ENCODE measurements at regions of chr6 and their contacts with region 1.

Region 1: GRCh38 chr6:145633981-145634627 is 101.2 kb downstream of the EPM2A start:
- ATAC-seq: peak; percentile 89 to 98 (median 94)
- H3K4me3 ChIP-seq: no peak overlapping the region
- H3K27ac ChIP-seq: no peak overlapping the region
- H3K4me1 ChIP-seq: peaks cover 0 to 10% of the 10 kb centered on the region in 2 donors

Region 2: DNA sequence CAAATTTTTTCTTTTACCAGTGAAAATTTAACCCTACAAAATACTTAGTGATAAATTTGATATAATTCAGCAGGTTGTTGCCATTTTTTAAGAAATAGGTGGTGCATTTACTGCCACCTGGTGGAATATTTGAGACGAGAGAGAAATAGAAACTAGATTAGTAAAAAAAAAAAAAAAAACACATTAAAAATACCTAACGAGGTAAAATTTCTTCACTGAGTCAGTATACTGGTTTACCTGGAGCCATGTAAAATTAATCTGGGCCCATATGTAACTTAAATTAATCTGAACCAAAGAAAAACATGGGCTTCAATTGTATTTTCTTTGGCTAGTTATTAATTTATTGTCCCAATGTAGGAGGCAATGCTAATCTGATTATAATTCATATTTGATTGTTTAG is 419.5 kb before region 1 on chr6:
- in situ Hi-C with region 1: loop called in 1 of 9 experiments (anchors 25 kb)
- ATAC-seq: no peak
- H3K4me3 ChIP-seq: no peak overlapping the region
- H3K27ac ChIP-seq: no peak overlapping the region
- H3K4me1 ChIP-seq: peaks cover 0 to 6% of the 10 kb centered on the region in 2 donors

Region 3: GRCh38 chr6:145247679-145248419 is 386.3 kb before region 1 on chr6:
- in situ Hi-C with region 1: loop called in 1 of 9 experiments (anchors 25 kb)
- ATAC-seq: peak in 2 of 8 experiments; percentile 48 to 73
- H3K4me3 ChIP-seq: no peak overlapping the region
- H3K27ac ChIP-seq: no peak overlapping the region
- H3K4me1 ChIP-seq: peaks cover 14 to 16% of the 10 kb centered on the region in 2 donors